ENCODE measurements at regions of chr5 and their contacts with region 1.

Region 1: DNA sequence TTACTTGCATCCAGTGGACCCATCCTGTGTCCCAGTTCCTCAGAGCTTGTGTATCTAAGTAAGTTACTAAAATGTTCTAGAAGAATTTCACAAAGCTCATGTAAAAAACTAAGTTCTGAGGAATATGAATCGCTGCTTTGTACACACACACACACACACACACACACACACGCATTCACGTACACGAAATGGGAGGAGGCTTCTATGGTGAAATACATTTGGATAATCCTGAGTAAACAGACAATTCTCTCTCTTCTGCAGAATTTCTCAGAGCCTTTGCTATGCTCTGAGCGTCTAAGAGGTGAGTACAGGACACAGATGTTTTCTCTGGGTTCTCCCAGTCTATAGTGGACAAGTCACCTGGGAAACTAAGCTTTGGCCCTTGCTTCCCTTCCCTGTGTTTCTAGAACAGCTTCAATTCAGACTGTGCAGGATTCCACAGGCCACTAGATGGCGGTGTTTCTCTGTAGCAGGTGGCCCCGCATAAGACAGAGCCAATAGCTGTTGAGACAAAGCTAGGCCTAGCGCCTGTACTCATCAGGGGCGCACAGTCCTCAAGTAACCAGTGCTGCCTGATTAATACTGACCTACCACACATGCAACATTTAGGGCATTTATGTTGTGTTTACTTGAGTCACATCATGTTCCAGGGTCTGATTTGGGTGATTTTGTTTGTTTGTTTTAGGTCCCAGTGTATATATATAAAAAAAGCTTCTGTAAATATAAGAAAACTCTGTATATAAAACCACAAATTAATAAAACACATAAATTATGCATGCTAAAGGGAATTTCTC is 114.8 kb downstream of the LIFR start:
- DNase-seq: peak; percentile 33
- ATAC-seq: peak; percentile 100
- H3K4me3 ChIP-seq: no peak overlapping the region
- H3K27ac ChIP-seq: no peak overlapping the region
- H3K4me1 ChIP-seq: no peaks in the 10 kb centered on the region
- H3K27me3 ChIP-seq: peaks cover 0 to 2% of the 10 kb centered on the region in 2 experiments; a peak in 3 of 4 replicates
- CTCF ChIP-seq: peak; percentile 90 to 96 (median 92); a peak in 5 of 6 replicates
- EP300 ChIP-seq: no peak
- POLR2A ChIP-seq: no peak
- RAD21 ChIP-seq: peak; percentile 99

Region 2: DNA sequence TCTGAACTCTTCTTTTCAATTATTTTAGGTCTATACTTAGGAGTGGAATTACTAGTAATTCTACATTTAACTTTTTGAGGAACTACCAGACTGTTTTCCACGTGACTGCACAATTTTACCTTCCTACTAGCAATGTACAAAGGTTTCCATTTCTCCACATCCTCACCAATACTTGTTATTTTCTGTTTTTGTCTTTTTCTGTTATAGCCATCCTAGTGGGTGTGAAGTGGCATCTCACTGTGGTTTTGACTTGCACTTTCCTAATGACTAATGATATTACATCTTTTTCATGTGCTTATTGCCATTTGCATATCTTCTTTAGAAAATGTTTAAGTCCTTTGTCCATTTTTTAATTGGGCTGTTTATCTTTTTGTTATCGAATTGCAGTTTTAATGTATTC is 320.2 kb before region 1 on chr5:
- CTCF ChIA-PET with region 1: no interaction called
- POLR2A ChIA-PET with region 1: no interaction called
- RAD21 ChIA-PET with region 1: no interaction called
- SMC1A ChIA-PET with region 1: no interaction called
- in situ Hi-C with region 1: no loop called
- intact Hi-C with region 1: no loop called
- DNase-seq: peak; percentile 11
- ATAC-seq: peak; percentile 53; the same call in 2 of the 3 replicates
- H3K4me3 ChIP-seq: no peak overlapping the region
- H3K27ac ChIP-seq: no peak overlapping the region
- H3K4me1 ChIP-seq: no peaks in the 10 kb centered on the region
- H3K27me3 ChIP-seq: no peaks in the 10 kb centered on the region
- CTCF ChIP-seq: no peak
- EP300 ChIP-seq: no peak
- POLR2A ChIP-seq: no peak
- RAD21 ChIP-seq: no peak

Region 3: DNA sequence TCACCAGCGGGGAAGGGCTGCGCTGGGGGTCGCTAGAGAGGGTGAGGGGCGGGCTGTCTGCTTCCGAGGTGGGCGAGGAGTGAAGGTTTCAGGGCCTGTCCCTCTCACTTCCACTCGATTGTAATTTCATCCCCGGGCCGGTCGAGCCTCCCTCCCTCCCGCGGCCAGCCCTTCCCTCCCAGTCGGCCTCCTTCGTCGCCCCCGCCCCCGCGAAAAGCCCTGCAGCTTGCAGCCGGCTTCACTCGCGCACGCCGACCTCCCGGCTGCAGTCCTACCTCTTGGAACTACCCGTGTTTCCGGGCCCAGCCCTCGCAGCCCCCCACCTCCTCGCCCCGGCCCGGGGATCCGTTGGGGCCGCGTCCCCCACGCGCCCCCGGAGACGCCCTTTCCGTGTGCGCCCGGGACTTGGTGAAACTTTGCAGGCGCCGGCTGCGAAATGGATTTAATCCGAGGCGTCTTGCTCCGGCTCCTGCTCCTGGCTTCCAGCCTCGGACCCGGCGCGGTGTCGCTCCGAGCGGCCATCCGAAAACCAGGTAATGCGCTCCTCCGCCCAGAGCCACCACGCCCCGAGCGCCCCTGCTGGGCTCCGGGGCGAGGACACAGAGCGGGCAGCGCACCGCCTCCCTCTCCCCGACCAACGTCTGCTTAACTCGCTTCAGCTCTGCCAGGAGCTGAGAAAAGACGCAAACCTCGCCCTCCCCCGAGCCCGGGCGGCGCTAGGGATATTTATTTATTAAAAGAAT is 183.2 kb before region 1 on chr5 and contains the start of gene EGFLAM:
- CTCF ChIA-PET with region 1: no interaction called
- POLR2A ChIA-PET with region 1: no interaction called
- RAD21 ChIA-PET with region 1: no interaction called
- SMC1A ChIA-PET with region 1: no interaction called
- in situ Hi-C with region 1: no loop called
- intact Hi-C with region 1: no loop called
- DNase-seq: no peak
- ATAC-seq: no peak
- H3K4me3 ChIP-seq: no peak within 1 kb of the TSS
- H3K27ac ChIP-seq: no peak within 1 kb of the TSS
- H3K4me1 ChIP-seq: no peaks in the 10 kb centered on the region
- H3K27me3 ChIP-seq: peaks cover 0 to 7% of the 10 kb centered on the region in 2 experiments; a peak in 1 of 4 replicates
- CTCF ChIP-seq: no peak
- EP300 ChIP-seq: no peak
- POLR2A ChIP-seq: no peak
- RAD21 ChIP-seq: no peak
- polyA plus RNA-seq, gene EGFLAM: not detected

Region 4: DNA sequence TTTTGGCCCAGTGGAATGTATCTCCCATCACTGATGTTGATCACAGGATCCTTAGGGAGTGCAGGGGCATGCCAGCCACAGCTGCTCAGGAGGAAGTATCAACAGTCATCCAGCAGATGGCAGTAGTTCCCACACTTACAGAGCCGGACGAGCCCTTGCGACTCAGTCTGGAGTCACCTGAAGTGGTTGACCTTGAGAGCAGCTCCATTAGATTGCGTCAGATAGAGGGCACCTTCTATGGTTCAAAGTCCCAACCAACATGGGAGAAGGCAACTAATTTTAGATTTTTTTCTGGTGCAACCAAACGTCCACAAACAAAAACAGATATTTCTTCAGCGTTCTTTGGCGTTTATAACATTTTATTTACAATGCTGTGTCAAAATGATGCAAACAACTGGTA is 58.8 kb before region 1 on chr5:
- CTCF ChIA-PET with region 1: interaction called, 10 read pairs
- POLR2A ChIA-PET with region 1: no interaction called
- RAD21 ChIA-PET with region 1: interaction called, 3 read pairs
- SMC1A ChIA-PET with region 1: interaction called, 3 read pairs
- in situ Hi-C with region 1: no loop called
- intact Hi-C with region 1: no loop called
- DNase-seq: peak; percentile 4
- ATAC-seq: peak; percentile 100
- H3K4me3 ChIP-seq: no peak overlapping the region
- H3K27ac ChIP-seq: no peak overlapping the region
- H3K4me1 ChIP-seq: no peaks in the 10 kb centered on the region
- H3K27me3 ChIP-seq: peaks cover 0 to 4% of the 10 kb centered on the region in 2 experiments; a peak in 1 of 4 replicates
- CTCF ChIP-seq: peak; percentile 67 to 83 (median 78)
- EP300 ChIP-seq: no peak
- POLR2A ChIP-seq: no peak
- RAD21 ChIP-seq: peak; percentile 49; the same call in 1 of the 2 replicates

Region 5: DNA sequence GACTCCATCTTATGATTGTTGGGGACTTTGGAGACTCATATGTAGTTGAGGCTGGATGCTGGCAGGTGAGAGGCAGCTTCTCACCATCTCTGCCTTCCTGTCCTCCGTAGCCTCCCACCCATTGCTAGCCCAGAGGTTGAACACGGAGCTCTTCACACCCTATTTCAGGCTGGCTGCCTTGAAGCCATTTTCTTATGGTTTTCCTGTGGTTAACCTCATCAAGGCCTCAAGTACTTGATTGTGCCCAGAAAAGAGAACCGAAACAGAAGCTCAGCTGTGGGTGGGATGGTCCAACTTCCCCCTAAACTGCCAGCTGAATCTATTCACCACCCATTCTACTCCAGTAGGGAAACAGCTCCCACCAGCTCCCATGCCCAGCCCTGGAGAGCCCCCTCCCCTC is 11.9 kb after region 1 on chr5:
- CTCF ChIA-PET with region 1: interaction called, 48 read pairs
- POLR2A ChIA-PET with region 1: interaction called, 5 read pairs
- RAD21 ChIA-PET with region 1: interaction called, 16 read pairs
- SMC1A ChIA-PET with region 1: interaction called, 19 read pairs
- in situ Hi-C with region 1: no loop called
- intact Hi-C with region 1: no loop called
- DNase-seq: peak; percentile 89
- ATAC-seq: peak; percentile 98
- H3K4me3 ChIP-seq: no peak overlapping the region
- H3K27ac ChIP-seq: no peak overlapping the region
- H3K4me1 ChIP-seq: peaks cover 16% of the 10 kb centered on the region
- H3K27me3 ChIP-seq: peaks cover 0 to 21% of the 10 kb centered on the region in 2 experiments
- CTCF ChIP-seq: no peak
- EP300 ChIP-seq: peak; percentile 87 to 88
- POLR2A ChIP-seq: no peak
- RAD21 ChIP-seq: no peak

Region 6: DNA sequence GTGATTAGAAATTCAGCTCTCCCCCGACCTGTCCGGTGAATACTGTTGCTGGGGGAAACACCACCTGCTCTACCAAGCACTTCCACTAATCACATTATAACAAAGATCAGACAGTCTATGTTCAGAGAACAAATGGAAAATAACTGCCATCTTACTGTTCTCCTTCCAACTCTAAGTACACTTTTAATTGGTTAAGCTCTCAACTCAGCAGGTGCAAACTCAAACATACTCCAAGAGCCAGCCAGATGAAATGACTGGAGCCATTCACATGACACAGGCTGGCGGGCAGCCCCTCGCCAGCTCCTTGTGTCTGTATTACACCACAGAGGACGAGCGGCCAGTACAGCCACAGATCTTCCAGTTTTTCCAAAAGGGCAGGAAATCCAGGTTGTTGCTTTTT is 98.7 kb after region 1 on chr5:
- CTCF ChIA-PET with region 1: interaction called, 18 read pairs
- POLR2A ChIA-PET with region 1: no interaction called
- RAD21 ChIA-PET with region 1: no interaction called
- SMC1A ChIA-PET with region 1: interaction called, 6 read pairs
- in situ Hi-C with region 1: no loop called
- intact Hi-C with region 1: no loop called
- DNase-seq: no peak
- ATAC-seq: no peak
- H3K4me3 ChIP-seq: no peak overlapping the region
- H3K27ac ChIP-seq: no peak overlapping the region
- H3K4me1 ChIP-seq: no peaks in the 10 kb centered on the region
- H3K27me3 ChIP-seq: no peaks in the 10 kb centered on the region; a peak in 1 of 4 replicates
- CTCF ChIP-seq: no peak
- EP300 ChIP-seq: no peak
- POLR2A ChIP-seq: no peak
- RAD21 ChIP-seq: no peak

Region 7: GRCh38 chr5:38621840-38622437 is 180.3 kb after region 1 on chr5:
- CTCF ChIA-PET with region 1: no interaction called
- POLR2A ChIA-PET with region 1: no interaction called
- RAD21 ChIA-PET with region 1: no interaction called
- SMC1A ChIA-PET with region 1: no interaction called
- in situ Hi-C with region 1: no loop called
- intact Hi-C with region 1: no loop called
- DNase-seq: no peak
- ATAC-seq: no peak
- H3K4me3 ChIP-seq: no peak overlapping the region
- H3K27ac ChIP-seq: no peak overlapping the region
- H3K4me1 ChIP-seq: no peaks in the 10 kb centered on the region
- H3K27me3 ChIP-seq: no peaks in the 10 kb centered on the region
- CTCF ChIP-seq: no peak
- EP300 ChIP-seq: no peak
- POLR2A ChIP-seq: no peak
- RAD21 ChIP-seq: no peak

Region 8: GRCh38 chr5:38666668-38667498 is 225.2 kb after region 1 on chr5:
- CTCF ChIA-PET with region 1: interaction called, 14 read pairs
- POLR2A ChIA-PET with region 1: no interaction called
- RAD21 ChIA-PET with region 1: interaction called, 9 read pairs
- SMC1A ChIA-PET with region 1: interaction called, 6 read pairs
- in situ Hi-C with region 1: no loop called
- intact Hi-C with region 1: loop called (anchors 1 kb)
- DNase-seq: no peak
- ATAC-seq: peak; percentile 51; the same call in 1 of the 3 replicates
- H3K4me3 ChIP-seq: no peak overlapping the region
- H3K27ac ChIP-seq: no peak overlapping the region
- H3K4me1 ChIP-seq: no peaks in the 10 kb centered on the region
- H3K27me3 ChIP-seq: 0 out of 4 replicates have a peak, but pooled peaks cover 0 to 2% of the 10 kb centered on the region in 2 experiments
- CTCF ChIP-seq: peak; percentile 24 to 40 (median 29); a peak in 4 of 6 replicates
- EP300 ChIP-seq: no peak
- POLR2A ChIP-seq: no peak
- RAD21 ChIP-seq: peak; percentile 16; the same call in 1 of the 2 replicates

Region 9: DNA sequence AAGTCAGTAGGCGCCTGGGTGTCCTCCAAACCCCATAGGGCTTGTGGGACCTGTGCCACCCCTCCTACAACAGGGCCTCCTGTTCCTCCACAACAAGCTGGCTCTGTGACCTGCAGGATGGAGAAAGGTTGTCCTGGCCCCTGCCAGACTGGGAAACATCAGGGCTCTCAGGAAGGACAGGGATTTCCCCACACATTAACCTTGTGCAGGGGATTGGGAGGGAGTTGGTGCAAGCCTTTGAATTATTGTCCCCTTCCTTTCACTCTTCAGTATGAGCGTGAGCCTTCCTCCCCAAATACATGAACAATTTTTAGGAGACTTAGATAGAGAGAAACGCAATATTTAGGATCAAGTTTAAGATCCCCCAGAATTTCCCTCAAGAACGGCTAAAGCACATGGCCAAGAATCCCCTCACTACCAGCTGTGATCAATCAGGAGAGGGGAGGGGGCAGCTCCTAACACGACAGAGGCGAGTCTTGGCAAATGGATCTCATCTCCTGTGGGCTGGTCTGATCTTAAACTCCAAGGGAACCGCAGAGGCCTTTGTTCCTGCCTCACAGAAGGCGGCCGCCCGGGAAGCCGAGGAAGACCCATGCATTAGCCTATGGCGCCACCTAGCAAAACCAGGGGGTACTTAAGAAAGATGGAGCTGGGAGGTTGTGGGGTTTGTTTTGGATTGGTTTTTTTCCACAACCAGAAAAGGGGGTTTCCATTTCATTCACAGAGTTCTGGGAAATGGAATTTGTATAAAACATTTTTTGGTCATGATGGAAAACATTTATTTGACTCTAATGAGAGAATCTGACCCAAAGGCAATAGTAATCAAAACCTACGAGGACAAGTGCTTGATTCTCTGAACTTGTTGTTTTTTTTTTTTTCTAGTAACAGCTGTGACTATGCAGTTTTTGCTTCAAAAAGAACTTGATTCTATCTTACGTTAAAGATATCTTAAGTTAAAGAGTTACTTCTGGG is 368.0 kb after region 1 on chr5:
- CTCF ChIA-PET with region 1: interaction called, 158 read pairs
- POLR2A ChIA-PET with region 1: no interaction called
- RAD21 ChIA-PET with region 1: interaction called, 118 read pairs
- SMC1A ChIA-PET with region 1: interaction called, 81 read pairs
- in situ Hi-C with region 1: loop called (anchors 5 kb)
- intact Hi-C with region 1: loop called (anchors 1 kb)
- DNase-seq: no peak
- ATAC-seq: peak; percentile 90
- H3K4me3 ChIP-seq: no peak overlapping the region
- H3K27ac ChIP-seq: no peak overlapping the region
- H3K4me1 ChIP-seq: no peaks in the 10 kb centered on the region
- H3K27me3 ChIP-seq: no peaks in the 10 kb centered on the region; a peak in 1 of 4 replicates
- CTCF ChIP-seq: peak; percentile 68 to 82 (median 71)
- EP300 ChIP-seq: no peak
- POLR2A ChIP-seq: no peak
- RAD21 ChIP-seq: peak; percentile 97

Region 10: DNA sequence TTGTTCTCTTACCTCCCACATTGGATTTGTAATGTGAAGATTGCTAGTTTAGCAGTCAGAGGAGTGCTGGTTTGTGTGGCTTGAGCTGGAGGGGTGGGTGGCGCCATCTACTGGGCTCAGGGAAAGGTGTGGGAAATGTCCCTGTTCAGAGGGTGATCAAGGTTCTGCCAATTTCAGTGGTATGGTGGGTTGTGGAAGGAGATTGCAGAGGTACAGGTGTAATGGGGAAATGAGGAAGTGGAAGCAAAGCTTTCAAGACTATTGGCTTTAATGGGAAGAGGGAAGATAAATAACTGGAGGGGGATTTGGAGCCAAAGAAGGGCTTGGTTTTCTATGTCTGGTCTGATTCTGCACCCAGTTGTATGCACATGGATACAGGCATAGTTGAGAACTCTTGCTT is 480.5 kb after region 1 on chr5:
- CTCF ChIA-PET with region 1: interaction called, 52 read pairs
- POLR2A ChIA-PET with region 1: no interaction called
- RAD21 ChIA-PET with region 1: interaction called, 20 read pairs
- SMC1A ChIA-PET with region 1: interaction called, 10 read pairs
- in situ Hi-C with region 1: no loop called
- intact Hi-C with region 1: loop called (anchors 2 kb)
- DNase-seq: no peak
- ATAC-seq: peak; percentile 97
- H3K4me3 ChIP-seq: no peak overlapping the region
- H3K27ac ChIP-seq: no peak overlapping the region
- H3K4me1 ChIP-seq: no peaks in the 10 kb centered on the region
- H3K27me3 ChIP-seq: no peaks in the 10 kb centered on the region
- CTCF ChIP-seq: peak; percentile 75 to 89 (median 83)
- EP300 ChIP-seq: no peak
- POLR2A ChIP-seq: no peak
- RAD21 ChIP-seq: peak; percentile 66

Measured in GM12878 (cell line).